H1 (cell line): ENCODE measurements at regions of chr1 and their contacts with region 1.

Region 1: GRCh38 chr1:220473440-220473839 is 54.5 kb upstream of the MARK1 start:
- DNase-seq: no peak
- H3K4me3 ChIP-seq: no peak overlapping the region
- H3K27ac ChIP-seq: no peak overlapping the region
- H3K4me1 ChIP-seq: no peaks in the 10 kb centered on the region
- H3K27me3 ChIP-seq: no peaks in the 10 kb centered on the region
- CTCF ChIP-seq: no peak
- EP300 ChIP-seq: no peak
- POLR2A ChIP-seq: no peak
- RAD21 ChIP-seq: no peak

Region 2: GRCh38 chr1:220483700-220484099 is 10.3 kb after region 1 on chr1:
- CTCF ChIA-PET with region 1: interaction called, 10 read pairs
- POLR2A ChIA-PET with region 1: no interaction called
- DNase-seq: no peak
- H3K4me3 ChIP-seq: no peak overlapping the region
- H3K27ac ChIP-seq: no peak overlapping the region
- H3K4me1 ChIP-seq: no peaks in the 10 kb centered on the region
- H3K27me3 ChIP-seq: no peaks in the 10 kb centered on the region
- CTCF ChIP-seq: no peak
- EP300 ChIP-seq: no peak
- POLR2A ChIP-seq: no peak
- RAD21 ChIP-seq: no peak

Region 3: DNA sequence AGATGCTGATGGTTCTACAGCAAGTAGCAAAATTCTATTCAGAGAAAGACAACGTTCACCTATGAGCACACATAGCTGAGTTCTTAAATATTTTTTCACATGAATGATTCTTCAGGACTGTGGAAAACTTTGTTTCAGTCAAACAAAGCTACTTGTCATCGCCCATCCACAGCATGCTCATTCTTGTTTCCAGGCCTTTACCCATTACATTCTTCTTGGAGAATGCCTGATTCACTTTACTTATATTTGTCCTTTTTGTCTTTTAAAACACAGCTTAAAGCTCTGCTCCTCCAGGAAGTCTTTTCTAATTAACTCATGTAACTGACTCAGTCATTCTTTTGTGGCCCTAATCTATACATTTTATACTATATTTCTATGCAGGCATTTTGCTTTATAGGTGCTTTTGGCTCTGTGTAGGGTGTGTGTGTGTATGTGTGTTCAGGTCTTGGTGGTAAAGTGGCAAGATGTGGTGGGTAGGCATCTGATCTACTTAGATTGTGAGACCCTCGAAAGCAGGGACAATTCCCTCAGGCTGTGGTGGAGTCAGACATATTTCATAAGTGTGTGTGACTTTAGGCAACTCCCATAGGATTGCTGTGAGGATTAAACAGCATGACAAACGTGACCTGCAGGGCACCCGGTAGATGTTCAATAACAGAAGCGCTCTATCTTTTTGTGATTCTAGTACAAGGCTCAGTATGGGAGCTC is 42.7 kb after region 1 on chr1:
- CTCF ChIA-PET with region 1: no interaction called
- POLR2A ChIA-PET with region 1: no interaction called
- DNase-seq: no peak
- H3K4me3 ChIP-seq: no peak overlapping the region
- H3K27ac ChIP-seq: no peak overlapping the region
- H3K4me1 ChIP-seq: peaks cover 0 to 3% (median 1%) of the 10 kb centered on the region in 4 experiments; a peak in 3 of 7 replicates
- H3K27me3 ChIP-seq: no peaks in the 10 kb centered on the region
- CTCF ChIP-seq: no peak
- EP300 ChIP-seq: no peak
- POLR2A ChIP-seq: no peak
- RAD21 ChIP-seq: no peak